ENCODE measurements at regions of chr10 and their contacts with region 1.

Region 1: DNA sequence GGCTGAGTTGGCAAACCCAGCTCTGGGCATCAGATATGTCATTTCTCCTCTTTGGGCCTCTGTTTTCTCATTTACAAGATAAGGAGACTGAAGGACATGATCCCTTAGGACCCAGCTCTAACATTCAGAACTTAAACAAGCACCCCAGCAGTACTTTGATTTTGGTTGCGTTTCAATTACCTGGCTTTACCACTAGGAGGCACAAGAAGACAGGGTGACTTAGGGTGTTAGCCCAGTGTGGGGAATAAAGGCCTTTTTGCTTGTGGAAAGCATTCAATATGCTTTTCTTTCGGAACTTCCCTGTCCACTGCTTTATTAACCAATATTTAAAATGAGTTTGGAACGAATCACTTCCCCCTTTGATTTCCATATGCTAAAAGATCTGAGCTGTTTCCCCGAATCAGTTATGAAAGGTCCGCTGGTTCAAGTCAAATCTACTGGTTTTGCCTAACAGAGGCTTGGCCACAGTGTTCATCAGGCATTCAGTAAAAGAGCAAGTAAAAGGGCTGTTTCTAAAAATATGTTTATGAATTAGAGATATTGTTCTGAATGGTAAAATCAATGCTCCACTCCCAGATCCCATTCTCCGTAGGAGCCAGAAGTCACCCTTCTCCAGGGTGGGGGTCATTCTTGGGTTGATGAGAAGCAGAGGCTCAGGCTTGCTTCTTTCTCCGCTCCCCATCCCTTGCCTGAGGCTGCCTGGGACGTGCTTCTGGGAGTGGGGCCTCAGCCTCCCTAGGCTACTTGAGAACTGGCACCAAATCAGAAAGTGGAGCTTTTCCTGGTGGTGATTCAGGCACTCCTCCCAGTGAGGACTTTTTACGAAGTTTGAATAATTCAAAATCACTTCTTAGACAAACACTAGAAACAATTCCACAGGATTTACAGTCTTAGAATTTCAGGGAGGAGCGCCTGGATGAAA is 105.5 kb downstream of the MYOF start:
- DNase-seq: peak; percentile 69
- ATAC-seq: peak; percentile 87
- H3K4me3 ChIP-seq: no peak overlapping the region
- H3K27ac ChIP-seq: no peak overlapping the region
- H3K4me1 ChIP-seq: peaks cover 10% of the 10 kb centered on the region
- H3K27me3 ChIP-seq: no peaks in the 10 kb centered on the region
- CTCF ChIP-seq: peak; percentile 91
- EP300 ChIP-seq: no peak
- POLR2A ChIP-seq: no peak
- RAD21 ChIP-seq: peak; percentile 86

Region 2: GRCh38 chr10:93509816-93510215 is 133.2 kb after region 1 on chr10:
- CTCF ChIA-PET with region 1: interaction called, 26 read pairs
- POLR2A ChIA-PET with region 1: no interaction called
- in situ Hi-C with region 1: no loop called
- intact Hi-C with region 1: loop called (anchors 1 kb)
- DNase-seq: no peak
- ATAC-seq: no peak
- H3K4me3 ChIP-seq: no peak overlapping the region
- H3K27ac ChIP-seq: no peak overlapping the region
- H3K4me1 ChIP-seq: no peaks in the 10 kb centered on the region
- H3K27me3 ChIP-seq: no peaks in the 10 kb centered on the region
- CTCF ChIP-seq: no peak
- EP300 ChIP-seq: no peak
- POLR2A ChIP-seq: no peak
- RAD21 ChIP-seq: no peak

Region 3: DNA sequence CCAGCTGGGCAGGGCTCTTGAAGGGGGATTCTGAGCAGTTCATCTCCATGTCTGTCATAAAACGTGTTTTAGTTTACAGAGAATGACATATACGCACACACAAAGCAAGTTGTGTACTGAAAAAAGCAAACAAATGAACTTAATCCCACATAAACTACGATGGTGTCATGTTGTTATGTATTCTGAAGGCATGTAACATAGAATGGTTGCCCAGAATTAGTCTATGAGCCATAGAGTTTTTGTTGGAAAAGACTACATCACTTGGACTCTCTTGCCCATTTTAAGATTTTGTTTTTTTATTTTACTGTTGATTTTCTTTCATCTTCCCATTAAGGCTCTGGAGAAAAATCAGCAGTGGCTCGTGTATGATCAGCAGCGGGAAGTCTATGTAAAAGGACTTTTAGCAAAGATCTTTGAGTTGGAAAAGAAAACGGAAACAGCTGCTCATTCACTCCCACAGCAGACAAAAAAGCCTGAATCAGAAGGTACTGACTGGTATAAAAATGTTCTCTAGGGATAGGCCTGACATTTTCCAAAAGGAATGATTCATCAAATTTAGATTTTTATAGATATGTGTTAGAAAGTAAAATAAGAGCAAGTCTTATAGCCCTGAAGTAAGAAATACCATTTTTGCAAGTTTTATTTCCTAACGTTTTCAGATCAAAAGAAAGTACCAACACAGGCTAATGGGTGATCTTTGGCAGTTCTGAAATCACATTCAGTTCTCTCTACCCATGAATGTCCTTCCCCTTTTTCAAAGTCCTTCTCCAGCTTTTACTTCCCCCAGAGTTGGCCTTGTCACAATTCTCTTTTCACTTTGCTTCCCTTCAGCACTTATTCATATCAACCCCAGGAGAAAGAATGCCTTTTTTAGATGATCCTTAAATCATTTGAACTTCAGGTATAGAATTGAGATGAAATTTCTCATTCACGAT is 138.7 kb after region 1 on chr10:
- CTCF ChIA-PET with region 1: interaction called, 26 read pairs
- POLR2A ChIA-PET with region 1: no interaction called
- in situ Hi-C with region 1: no loop called
- intact Hi-C with region 1: loop called (anchors 1 kb)
- DNase-seq: no peak
- ATAC-seq: no peak
- H3K4me3 ChIP-seq: no peak overlapping the region
- H3K27ac ChIP-seq: no peak overlapping the region
- H3K4me1 ChIP-seq: no peaks in the 10 kb centered on the region
- H3K27me3 ChIP-seq: no peaks in the 10 kb centered on the region
- CTCF ChIP-seq: no peak
- EP300 ChIP-seq: no peak
- POLR2A ChIP-seq: no peak
- RAD21 ChIP-seq: no peak

Measured in HepG2 (cell line).